Activated T-helper 2 cell treated with anti-CD3 and anti-CD28 coated beads, Interferon-gamma antibody, Interleukin-2, Interleukin-4, amounts not matched to agents 10 μg/mL and 5 μg/mL and 100 μg/mL, durations not matched to agents 14 hours and 24 hours and 36 hours (primary cell): ENCODE measurements at regions of chr16 and their contacts with region 1.

Region 1: GRCh38 chr16:11667824-11668622 is at the start of gene SNN:
- DNase-seq: peak; percentile 82
- H3K4me3 Mint-ChIP-seq: peak within 1 kb of the TSS; percentile 72
- H3K27ac Mint-ChIP-seq: no peak within 1 kb of the TSS
- H3K4me1 Mint-ChIP-seq: peaks cover 58% of the 10 kb centered on the region
- H3K27me3 Mint-ChIP-seq: peaks cover 2% of the 10 kb centered on the region
- total RNA-seq, gene SNN: 8.6 and 9.5 TPM in 2 replicates

Region 2: GRCh38 chr16:11515540-11516430 is 152.2 kb before region 1 on chr16:
- intact Hi-C with region 1: no loop called
- DNase-seq: no peak
- H3K4me3 Mint-ChIP-seq: no peak overlapping the region
- H3K27ac Mint-ChIP-seq: no peak overlapping the region
- H3K4me1 Mint-ChIP-seq: no peaks in the 10 kb centered on the region
- H3K27me3 Mint-ChIP-seq: peaks cover 3% of the 10 kb centered on the region

Region 3: DNA sequence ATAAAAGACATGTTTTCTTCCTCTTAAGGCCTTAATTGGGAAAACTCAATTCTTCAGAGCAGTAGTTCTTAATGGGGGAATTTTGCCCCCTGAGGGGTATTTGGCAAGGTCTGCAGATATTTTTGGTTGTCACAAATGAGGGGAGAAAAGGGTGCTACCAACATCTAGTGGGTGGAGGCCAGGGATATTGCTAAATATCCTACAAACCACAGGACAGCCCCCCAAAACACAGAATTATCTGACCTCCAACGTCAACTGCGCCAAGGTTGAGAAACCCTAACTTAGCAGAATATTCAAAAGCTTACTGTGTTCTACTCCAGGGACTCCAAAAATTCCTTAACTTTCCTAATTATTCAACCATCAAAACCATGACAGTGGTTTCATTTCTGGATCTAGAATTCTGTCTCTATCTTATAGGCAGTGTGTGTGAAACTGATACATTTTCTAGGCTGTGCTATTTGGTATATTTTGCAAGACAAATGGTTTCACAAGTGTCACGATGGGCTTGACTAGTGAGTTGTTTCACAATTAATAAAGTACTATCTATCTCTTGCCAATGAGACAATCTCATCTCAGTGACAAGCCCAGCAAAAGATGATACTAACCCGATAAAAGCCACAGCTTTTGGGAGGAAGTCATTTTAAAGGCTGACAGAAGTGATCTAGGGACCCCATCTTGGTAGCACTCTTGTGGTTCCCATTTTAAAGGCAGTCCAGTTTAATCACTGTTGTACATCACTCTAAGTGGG is 59.9 kb after region 1 on chr16:
- intact Hi-C with region 1: loop called (anchors 5 kb)
- DNase-seq: no peak
- H3K4me3 Mint-ChIP-seq: no peak overlapping the region
- H3K27ac Mint-ChIP-seq: peak overlapping the region; percentile 80
- H3K4me1 Mint-ChIP-seq: peaks cover 51% of the 10 kb centered on the region
- H3K27me3 Mint-ChIP-seq: no peaks in the 10 kb centered on the region